Activated CD4-positive, alpha-beta memory T cell treated with anti-CD3 and anti-CD28 coated beads, Interleukin-2, amount 10 ng/mL, durations not matched to agents 7 days and 5 days (primary cell): ENCODE measurements at regions of chr17 and their contacts with region 1.

Region 1: DNA sequence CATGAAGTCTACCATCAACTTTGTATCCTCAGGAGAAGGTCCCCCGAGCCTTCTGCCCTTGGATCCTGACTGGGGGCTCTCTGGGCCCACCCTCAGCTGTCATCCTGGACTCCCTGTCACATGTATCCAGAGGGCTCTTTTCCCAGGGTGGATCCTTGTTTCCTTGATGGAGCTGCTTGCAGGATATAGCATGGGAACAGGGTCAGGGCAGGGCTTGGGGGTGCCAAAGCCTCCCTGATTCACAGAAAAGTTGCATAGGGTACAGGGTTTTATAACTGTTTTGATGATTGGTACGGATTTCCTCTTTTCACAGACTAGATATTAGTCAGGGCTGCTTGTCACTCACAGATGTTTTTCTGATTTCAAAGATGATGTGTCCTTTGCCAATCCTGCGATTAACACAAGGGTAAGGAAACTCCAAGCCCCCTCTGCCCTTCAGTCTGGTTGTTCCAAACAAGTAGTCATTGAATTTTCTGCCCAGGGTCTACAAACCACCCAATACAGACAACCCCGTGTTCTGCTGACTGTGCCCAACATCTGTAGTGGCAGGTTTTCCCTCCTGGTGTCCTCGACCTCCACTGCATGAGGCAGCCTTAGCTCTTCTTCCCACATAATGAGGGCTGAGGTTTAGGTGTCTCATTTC is 20.6 kb upstream of the SLC35G3 start:
- DNase-seq: peak; percentile 48
- H3K4me3 Mint-ChIP-seq: peak overlapping the region; percentile 64
- H3K27ac Mint-ChIP-seq: peak overlapping the region; percentile 98
- H3K4me1 Mint-ChIP-seq: peaks cover 80% of the 10 kb centered on the region
- H3K27me3 Mint-ChIP-seq: no peaks in the 10 kb centered on the region

Region 2: DNA sequence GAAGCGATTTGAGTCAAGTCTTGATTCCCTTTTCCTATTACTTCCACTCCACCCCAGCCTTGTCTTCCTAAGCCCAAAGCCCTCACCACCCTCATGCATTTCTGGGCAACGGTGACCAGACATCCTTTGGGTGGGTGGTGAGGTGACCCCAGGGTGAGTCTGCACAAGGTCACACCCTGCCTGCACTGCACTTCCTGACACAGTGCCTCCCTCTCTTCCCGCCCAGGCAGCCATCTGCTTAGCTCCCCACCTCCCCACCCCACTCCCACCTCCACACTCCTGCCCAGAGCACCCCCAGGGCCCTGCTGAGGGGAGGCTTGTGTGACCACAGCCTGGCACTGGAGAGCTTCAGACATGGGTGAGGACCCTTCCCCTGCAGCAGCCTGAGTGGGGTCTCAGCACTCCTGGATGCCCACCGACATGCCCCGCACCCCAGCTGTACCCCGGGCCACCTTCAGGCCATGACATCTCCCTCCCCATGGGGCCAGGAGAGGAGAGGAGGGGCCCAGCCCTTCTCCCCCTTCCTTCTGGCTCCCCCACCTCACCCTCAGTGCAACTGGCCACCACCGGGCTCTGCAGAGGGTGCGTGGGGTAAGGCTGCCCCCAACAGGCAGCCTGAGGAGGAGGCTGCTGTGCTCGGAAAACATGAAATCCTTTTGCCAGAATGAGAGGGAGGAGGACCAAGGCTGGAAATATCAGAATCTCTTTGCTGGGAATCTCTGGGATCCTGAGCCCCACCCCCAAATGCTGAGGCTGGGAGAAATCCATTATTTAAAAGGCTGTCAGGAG is 322.1 kb before region 1 on chr17:
- CTCF ChIA-PET with region 1: no interaction called
- POLR2A ChIA-PET with region 1: no interaction called
- DNase-seq: no peak
- H3K4me3 Mint-ChIP-seq: no peak overlapping the region
- H3K27ac Mint-ChIP-seq: no peak overlapping the region
- H3K4me1 Mint-ChIP-seq: no peaks in the 10 kb centered on the region
- H3K27me3 Mint-ChIP-seq: peaks cover 21% of the 10 kb centered on the region

Region 3: DNA sequence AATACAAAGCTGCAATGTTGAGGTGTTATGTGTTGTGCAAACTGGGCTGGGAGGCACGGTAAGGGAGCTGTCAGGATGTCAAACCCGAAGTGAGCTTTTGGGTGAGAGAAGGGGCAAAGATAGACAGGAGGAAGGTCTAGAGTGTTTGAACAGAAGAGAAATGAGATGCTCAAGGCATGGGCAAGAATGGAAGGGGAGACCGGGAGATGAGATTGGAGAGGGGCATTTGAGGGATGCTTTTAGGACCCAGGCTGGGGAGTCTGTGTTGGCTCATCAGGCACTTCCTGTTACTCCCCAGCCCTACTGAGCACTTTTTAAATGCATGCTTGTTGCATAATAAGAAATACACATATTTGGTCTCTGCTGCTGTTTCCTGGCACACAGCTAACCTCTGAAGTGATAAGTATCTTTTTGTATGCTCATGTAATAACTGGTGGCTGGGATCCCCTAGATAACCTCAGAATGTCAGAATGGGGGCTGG is 53.4 kb before region 1 on chr17:
- CTCF ChIA-PET with region 1: no interaction called
- POLR2A ChIA-PET with region 1: interaction called, 19 read pairs
- DNase-seq: peak; percentile 32
- H3K4me3 Mint-ChIP-seq: peak overlapping the region; percentile 22
- H3K27ac Mint-ChIP-seq: peak overlapping the region; percentile 77
- H3K4me1 Mint-ChIP-seq: peaks cover 43% of the 10 kb centered on the region
- H3K27me3 Mint-ChIP-seq: peaks cover 2% of the 10 kb centered on the region

Region 4: GRCh38 chr17:35189291-35189690 is 25.5 kb before region 1 on chr17:
- CTCF ChIA-PET with region 1: interaction called, 3 read pairs
- POLR2A ChIA-PET with region 1: interaction called, 25 read pairs
- DNase-seq: no peak
- H3K4me3 Mint-ChIP-seq: no peak overlapping the region
- H3K27ac Mint-ChIP-seq: no peak overlapping the region
- H3K4me1 Mint-ChIP-seq: peaks cover 26% of the 10 kb centered on the region
- H3K27me3 Mint-ChIP-seq: peaks cover 7% of the 10 kb centered on the region

Region 5: GRCh38 chr17:35242805-35243560 is 28.2 kb after region 1 on chr17 and contains the start of gene SLFN5:
- CTCF ChIA-PET with region 1: interaction called, 48 read pairs
- POLR2A ChIA-PET with region 1: interaction called, 498 read pairs
- DNase-seq: peak; percentile 96
- H3K4me3 Mint-ChIP-seq: peak within 1 kb of the TSS; percentile 95
- H3K27ac Mint-ChIP-seq: peak within 1 kb of the TSS; percentile 96
- H3K4me1 Mint-ChIP-seq: peaks cover 60% of the 10 kb centered on the region
- H3K27me3 Mint-ChIP-seq: no peaks in the 10 kb centered on the region
- total RNA-seq, gene SLFN5: 231 to 240 TPM

Region 6: GRCh38 chr17:35373534-35373983 is 158.8 kb after region 1 on chr17 and contains the start of gene SLFN11:
- CTCF ChIA-PET with region 1: no interaction called
- POLR2A ChIA-PET with region 1: interaction called, 27 read pairs
- DNase-seq: peak; percentile 85
- H3K4me3 Mint-ChIP-seq: peak within 1 kb of the TSS; percentile 97
- H3K27ac Mint-ChIP-seq: peak within 1 kb of the TSS; percentile 96
- H3K4me1 Mint-ChIP-seq: peaks cover 56% of the 10 kb centered on the region
- H3K27me3 Mint-ChIP-seq: no peaks in the 10 kb centered on the region
- total RNA-seq, gene SLFN11: 67.5 to 72.6 TPM

Region 7: GRCh38 chr17:35423761-35424160 is 209.0 kb after region 1 on chr17:
- CTCF ChIA-PET with region 1: no interaction called
- POLR2A ChIA-PET with region 1: no interaction called
- DNase-seq: no peak
- H3K4me3 Mint-ChIP-seq: no peak overlapping the region
- H3K27ac Mint-ChIP-seq: no peak overlapping the region
- H3K4me1 Mint-ChIP-seq: peaks cover 12% of the 10 kb centered on the region
- H3K27me3 Mint-ChIP-seq: no peaks in the 10 kb centered on the region

Region 8: DNA sequence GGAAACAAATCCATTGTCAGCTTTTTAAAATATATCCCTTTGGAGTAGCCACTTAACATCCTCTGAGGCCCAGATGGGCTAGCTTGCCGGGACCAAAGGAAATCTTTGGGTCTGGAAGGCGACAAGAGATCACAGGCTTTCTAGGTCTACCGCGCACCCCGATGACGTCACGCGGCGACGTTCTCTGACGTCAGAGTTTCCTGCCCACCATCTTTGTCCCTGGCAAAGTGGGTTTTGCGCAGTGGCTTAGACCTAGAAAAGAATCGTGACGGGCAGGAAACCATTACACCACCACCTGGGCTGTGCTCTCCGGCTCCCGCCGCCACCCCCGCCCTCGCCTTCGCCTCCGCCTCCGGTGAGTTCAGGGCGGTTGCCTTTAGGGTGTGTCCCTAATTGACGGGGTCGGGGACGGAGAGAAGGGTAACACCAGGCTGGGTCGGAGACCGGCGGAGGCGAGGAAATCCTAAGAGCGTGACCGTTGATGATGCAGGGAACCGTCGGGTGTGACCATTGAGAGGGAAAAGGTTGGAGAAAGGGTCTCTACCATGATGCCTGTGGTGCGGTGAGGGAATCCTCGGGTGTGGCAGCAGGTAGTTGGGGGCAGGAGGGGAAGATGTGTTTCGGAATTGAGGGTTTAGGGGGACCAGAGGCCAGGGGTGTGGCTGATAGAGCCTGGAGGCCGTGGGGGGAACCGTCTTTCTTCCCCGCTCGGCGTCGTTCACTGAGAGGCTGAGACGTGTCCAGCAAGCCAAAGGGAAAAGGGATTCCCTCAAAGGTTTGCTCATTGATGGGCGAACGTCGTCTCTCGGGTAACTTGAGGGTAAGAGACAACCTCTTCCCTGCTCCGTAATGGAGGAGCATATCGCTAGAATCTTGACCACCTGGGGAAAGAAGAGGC is 372.6 kb after region 1 on chr17 and contains the start of gene AP2B1:
- CTCF ChIA-PET with region 1: no interaction called
- POLR2A ChIA-PET with region 1: interaction called, 11 read pairs
- DNase-seq: peak; percentile 98
- H3K4me3 Mint-ChIP-seq: peak within 1 kb of the TSS; percentile 96
- H3K27ac Mint-ChIP-seq: peak within 1 kb of the TSS; percentile 97
- H3K4me1 Mint-ChIP-seq: peaks cover 38% of the 10 kb centered on the region
- H3K27me3 Mint-ChIP-seq: peaks cover 11% of the 10 kb centered on the region
- total RNA-seq, gene AP2B1: 196 to 203 TPM